Activated CD8-positive, alpha-beta memory T cell treated with anti-CD3 and anti-CD28 coated beads, Interleukin-2, amount 10 ng/mL, durations not matched to agents 7 days and 5 days (primary cell): ENCODE measurements at regions of chr11 and their contacts with region 1.

Region 1: DNA sequence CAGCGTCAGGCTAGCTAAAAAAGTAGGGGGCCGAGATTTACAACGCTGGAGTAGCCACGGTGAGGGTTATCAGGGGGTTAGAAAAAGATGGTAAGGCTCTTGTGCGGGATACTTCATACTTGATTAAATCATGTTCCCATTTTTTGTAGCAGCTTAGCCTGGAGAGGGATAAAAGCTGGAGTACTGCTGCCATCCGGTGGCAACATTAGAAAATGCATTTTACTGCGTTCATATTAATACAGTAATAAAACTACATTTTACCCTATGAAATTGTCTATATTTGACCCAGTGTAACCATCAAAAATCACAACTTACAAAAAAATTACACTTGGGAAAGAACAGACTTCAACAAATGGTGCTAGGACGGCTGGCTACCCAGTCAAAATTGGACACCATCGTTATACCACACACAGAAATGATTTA is 17.3 kb downstream of the RPUSD4 start:
- DNase-seq: no peak
- ATAC-seq: peak; percentile 51
- H3K4me3 Mint-ChIP-seq: no peak overlapping the region
- H3K27ac Mint-ChIP-seq: no peak overlapping the region
- H3K4me1 Mint-ChIP-seq: no peaks in the 10 kb centered on the region
- H3K27me3 Mint-ChIP-seq: no peaks in the 10 kb centered on the region

Region 2: DNA sequence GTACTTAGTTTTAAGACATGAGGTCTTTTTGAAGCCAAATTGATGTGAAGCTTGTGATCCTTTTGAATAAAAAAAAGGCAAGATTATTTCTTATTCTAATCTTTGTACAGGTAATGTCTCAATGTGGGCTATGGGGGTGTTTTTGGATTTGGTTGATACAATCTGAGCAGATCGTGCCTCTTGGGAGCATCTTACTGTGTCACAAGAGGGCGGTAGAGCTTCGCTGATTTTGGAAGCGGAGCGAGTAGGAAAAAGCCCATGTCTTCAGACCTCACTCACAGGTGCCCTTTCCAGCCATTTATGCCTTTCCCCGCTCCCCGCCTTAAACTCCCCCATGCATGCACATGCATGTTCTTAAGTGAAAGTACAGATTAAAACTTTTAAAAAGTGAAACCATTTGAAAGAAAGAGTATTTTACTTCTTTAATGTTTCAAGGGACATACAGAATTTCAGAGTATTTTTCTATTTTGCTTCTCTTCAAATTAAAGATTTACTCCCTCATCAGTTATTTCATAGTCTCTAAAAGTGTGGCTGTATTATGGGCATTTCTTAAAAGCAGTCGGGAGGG is 271.0 kb before region 1 on chr11:
- CTCF ChIA-PET with region 1: interaction called, 24 read pairs
- DNase-seq: peak; percentile 73
- ATAC-seq: peak; percentile 90
- H3K4me3 Mint-ChIP-seq: no peak overlapping the region
- H3K27ac Mint-ChIP-seq: no peak overlapping the region
- H3K4me1 Mint-ChIP-seq: no peaks in the 10 kb centered on the region
- H3K27me3 Mint-ChIP-seq: peaks cover 25% of the 10 kb centered on the region

Region 3: DNA sequence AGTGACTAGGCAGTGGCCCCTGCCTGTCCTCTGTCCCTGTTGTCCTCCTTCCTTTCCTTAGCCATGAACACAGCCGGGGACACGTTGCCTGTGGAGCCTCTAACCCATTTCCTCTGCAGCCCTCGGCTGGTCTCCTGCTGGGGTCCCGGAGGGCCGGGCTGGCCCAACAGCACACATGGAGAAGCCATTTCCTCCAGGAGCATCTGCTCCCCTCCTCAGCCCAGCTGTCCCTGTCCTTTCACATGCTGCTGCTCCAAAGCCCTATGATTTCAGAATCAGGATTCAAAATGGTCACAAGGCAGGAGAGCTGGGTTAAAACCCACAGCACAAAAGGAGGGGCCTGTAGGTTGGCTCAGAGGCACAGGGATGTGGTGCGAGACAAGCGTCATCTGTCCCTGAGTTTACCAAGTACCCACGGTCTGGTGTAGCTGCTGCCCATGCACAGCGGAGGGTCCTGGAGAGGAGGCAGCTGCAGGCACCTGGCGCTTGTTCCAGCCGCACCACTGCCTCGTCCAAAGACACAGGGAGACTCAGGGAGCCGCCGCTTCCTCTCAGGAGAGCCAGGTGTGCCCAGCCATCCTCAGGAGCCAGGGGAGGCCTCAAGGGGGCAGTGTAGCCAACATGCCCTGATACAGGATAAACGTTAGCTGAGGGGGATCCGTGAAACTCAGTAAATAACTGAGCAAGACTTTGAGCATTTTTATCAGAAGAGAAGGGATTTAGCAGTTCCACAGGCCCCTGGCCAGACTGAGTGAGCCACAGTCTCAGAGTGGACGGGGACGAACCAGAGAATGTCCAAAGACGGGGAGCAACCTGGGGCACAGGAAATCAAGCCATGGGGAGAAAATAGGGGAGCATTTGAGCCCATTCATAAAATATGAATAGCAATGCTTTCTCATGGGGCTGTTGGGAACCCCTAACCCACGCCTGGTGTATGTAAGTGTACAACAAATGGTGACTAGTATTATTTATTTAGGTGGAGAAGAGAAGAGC is 252.2 kb before region 1 on chr11:
- CTCF ChIA-PET with region 1: interaction called, 26 read pairs
- DNase-seq: peak; percentile 58
- ATAC-seq: peak; percentile 73
- H3K4me3 Mint-ChIP-seq: no peak overlapping the region
- H3K27ac Mint-ChIP-seq: no peak overlapping the region
- H3K4me1 Mint-ChIP-seq: peaks cover 11% of the 10 kb centered on the region
- H3K27me3 Mint-ChIP-seq: peaks cover 3% of the 10 kb centered on the region

Region 4: DNA sequence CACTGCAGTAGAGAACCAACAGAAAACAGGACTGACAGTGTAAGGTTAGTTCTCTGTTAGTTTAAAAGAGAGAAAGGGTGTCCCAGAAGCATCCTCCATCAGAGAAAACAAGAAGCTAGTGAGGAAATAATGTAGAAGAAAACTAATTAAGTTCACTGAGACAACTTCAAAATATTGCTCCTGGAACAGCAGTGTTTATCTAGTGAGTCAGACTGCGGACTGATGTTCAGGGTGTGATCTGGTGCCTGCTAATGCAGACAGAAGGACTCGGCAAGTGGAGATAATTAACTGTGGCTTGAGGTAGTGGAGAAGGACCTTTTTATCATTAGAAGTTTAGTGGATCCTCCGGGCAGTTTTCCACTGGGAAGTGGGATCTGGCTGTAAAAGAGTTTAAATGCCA is 186.9 kb before region 1 on chr11:
- CTCF ChIA-PET with region 1: no interaction called
- DNase-seq: no peak
- ATAC-seq: no peak
- H3K4me3 Mint-ChIP-seq: no peak overlapping the region
- H3K27ac Mint-ChIP-seq: no peak overlapping the region
- H3K4me1 Mint-ChIP-seq: peaks cover 8% of the 10 kb centered on the region
- H3K27me3 Mint-ChIP-seq: peaks cover 14% of the 10 kb centered on the region

Region 5: DNA sequence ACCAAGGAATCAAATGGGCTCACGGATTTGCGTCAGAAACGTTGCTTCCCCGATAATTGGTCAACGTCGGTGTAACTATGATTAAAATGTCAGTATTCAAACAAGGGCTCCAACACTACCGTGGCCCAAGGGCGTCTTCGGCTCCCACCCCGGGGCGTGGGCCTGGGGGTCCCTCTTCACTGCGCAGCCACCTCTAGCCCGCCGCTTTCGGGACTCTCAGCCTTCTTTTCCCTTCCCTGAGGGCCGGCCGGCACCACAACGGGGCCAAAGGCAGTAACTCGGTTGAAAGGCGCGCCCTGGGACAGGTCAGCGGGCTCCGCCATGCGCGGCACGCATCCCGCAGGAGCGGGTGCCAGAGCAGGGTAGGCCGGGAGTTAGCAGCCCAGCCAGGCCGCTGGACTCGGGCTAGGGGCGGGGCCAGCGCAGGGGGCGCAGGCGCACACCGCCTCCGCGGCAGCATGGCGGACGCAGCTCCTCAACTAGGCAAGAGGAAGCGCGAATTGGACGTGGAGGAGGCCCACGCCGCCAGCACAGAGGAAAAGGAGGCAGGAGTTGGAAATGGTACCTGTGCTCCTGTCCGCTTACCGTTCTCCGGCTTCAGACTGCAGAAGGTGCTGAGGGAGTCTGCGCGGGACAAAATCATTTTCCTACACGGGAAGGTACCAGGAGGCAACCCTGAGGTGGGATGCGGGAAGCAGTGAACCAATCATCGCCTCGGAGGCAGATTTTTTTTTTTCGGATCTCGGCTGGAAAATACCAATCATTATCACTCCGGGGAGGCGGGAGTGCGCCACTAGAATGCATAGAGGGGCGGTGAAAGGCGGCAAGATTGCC is 109.7 kb after region 1 on chr11 and contains the start of gene DCPS:
- CTCF ChIA-PET with region 1: no interaction called
- DNase-seq: peak; percentile 91
- ATAC-seq: peak; percentile 98
- H3K4me3 Mint-ChIP-seq: peak within 1 kb of the TSS; percentile 90
- H3K27ac Mint-ChIP-seq: peak within 1 kb of the TSS; percentile 85
- H3K4me1 Mint-ChIP-seq: peaks cover 33% of the 10 kb centered on the region
- H3K27me3 Mint-ChIP-seq: no peaks in the 10 kb centered on the region
- total RNA-seq, gene DCPS: 40.6 to 41.9 TPM

Region 6: GRCh38 chr11:126345759-126346585 is 151.8 kb after region 1 on chr11:
- CTCF ChIA-PET with region 1: no interaction called
- DNase-seq: no peak
- ATAC-seq: no peak
- H3K4me3 Mint-ChIP-seq: no peak overlapping the region
- H3K27ac Mint-ChIP-seq: peak overlapping the region; percentile 69
- H3K4me1 Mint-ChIP-seq: peaks cover 40% of the 10 kb centered on the region
- H3K27me3 Mint-ChIP-seq: no peaks in the 10 kb centered on the region